K562 (cell line): ENCODE measurements at regions of chr6 and their contacts with region 1.

Region 1: GRCh38 chr6:125314019-125314581 is 12.3 kb upstream of the HDDC2 start:
- DNase-seq: peak; percentile 51 to 77 (median 62)
- ATAC-seq: peak; percentile 97
- H3K4me3 ChIP-seq: no peak overlapping the region
- H3K27ac ChIP-seq: no peak overlapping the region
- H3K4me1 ChIP-seq: no peaks in the 10 kb centered on the region
- H3K27me3 ChIP-seq: peaks cover 4 to 5% of the 10 kb centered on the region in 2 experiments; a peak in 3 of 5 replicates
- CTCF ChIP-seq: peak; percentile 93 to 96 (median 96)
- EP300 ChIP-seq: no peak
- POLR2A ChIP-seq: no peak
- RAD21 ChIP-seq: peak; percentile 91 to 95

Region 2: DNA sequence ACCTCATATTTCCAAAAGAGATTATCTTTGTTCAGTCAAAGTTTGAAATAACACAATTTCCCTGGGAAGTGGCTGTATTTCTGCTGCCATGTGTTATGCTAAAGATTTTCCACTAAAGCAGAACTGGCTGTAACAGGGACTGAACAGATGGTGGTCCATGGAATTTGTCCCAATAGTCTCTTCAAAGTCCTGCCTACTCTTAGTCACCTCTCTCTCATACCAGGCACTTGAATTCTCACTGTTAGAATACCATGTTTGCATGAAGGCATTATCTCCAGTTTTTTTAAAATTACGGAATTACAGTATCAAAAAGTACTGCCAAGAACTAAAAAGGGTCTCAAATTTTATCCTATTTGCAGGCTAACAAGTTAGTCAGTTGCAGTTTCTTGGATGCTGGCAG is 92.6 kb after region 1 on chr6:
- CTCF ChIA-PET with region 1: no interaction called
- POLR2A ChIA-PET with region 1: no interaction called
- in situ Hi-C with region 1: no loop called
- intact Hi-C with region 1: no loop called
- DNase-seq: no peak
- ATAC-seq: no peak
- H3K4me3 ChIP-seq: no peak overlapping the region
- H3K27ac ChIP-seq: no peak overlapping the region
- H3K4me1 ChIP-seq: no peaks in the 10 kb centered on the region
- H3K27me3 ChIP-seq: no peaks in the 10 kb centered on the region
- CTCF ChIP-seq: no peak
- EP300 ChIP-seq: no peak
- POLR2A ChIP-seq: no peak
- RAD21 ChIP-seq: no peak

Region 3: GRCh38 chr6:125469915-125470314 is 155.8 kb after region 1 on chr6:
- CTCF ChIA-PET with region 1: no interaction called
- POLR2A ChIA-PET with region 1: no interaction called
- in situ Hi-C with region 1: no loop called
- intact Hi-C with region 1: loop called (anchors 10 kb)
- DNase-seq: no peak
- ATAC-seq: no peak
- H3K4me3 ChIP-seq: no peak overlapping the region
- H3K27ac ChIP-seq: no peak overlapping the region
- H3K4me1 ChIP-seq: no peaks in the 10 kb centered on the region
- H3K27me3 ChIP-seq: no peaks in the 10 kb centered on the region
- CTCF ChIP-seq: no peak
- EP300 ChIP-seq: no peak
- POLR2A ChIP-seq: no peak
- RAD21 ChIP-seq: no peak

Region 4: DNA sequence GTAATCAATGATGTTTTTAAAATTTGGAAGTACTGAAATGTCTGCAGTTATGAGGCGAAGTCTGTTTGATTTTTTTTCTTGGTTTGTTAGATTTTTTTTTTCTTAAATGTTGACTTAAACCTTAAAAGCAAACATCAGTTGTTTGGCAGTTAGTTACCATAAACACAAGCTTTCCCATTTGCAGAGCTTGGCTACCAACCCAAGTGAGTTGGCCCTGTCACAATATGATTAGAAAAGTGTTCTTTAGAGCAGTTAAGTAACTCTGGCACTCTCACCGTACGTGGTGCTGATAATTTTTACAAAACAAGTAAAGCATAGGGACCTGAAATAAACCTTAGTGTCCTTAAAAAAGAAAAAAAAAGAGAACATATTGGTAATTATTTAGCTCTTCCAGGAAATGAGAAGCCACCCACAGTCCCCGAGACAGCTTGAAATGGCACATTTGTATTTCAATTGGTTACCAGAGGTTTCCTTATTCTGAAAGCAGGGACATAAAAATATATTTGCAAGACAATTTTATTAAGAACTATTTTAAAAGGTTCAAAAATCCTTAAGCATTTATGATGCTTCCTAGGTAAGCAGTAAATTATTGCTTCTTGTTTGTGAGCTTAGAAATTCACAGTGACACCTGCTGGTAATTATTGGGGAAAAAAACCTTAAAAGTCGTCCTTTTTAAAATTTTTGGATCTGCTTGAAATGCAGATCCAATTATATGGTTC is 439.3 kb after region 1 on chr6:
- CTCF ChIA-PET with region 1: interaction called, 10 read pairs
- POLR2A ChIA-PET with region 1: no interaction called
- in situ Hi-C with region 1: loop called (anchors 5 kb)
- intact Hi-C with region 1: loop called (anchors 1 kb)
- DNase-seq: peak in 1 of 4 experiments; percentile 36
- ATAC-seq: no peak
- H3K4me3 ChIP-seq: no peak overlapping the region
- H3K27ac ChIP-seq: no peak overlapping the region
- H3K4me1 ChIP-seq: peaks cover 9 to 17% of the 10 kb centered on the region in 2 experiments; a peak in 4 of 5 replicates
- H3K27me3 ChIP-seq: peaks cover 16 to 27% of the 10 kb centered on the region in 2 experiments
- CTCF ChIP-seq: peak in 1 of 3 experiments; percentile 61; a peak in 2 of 6 replicates
- EP300 ChIP-seq: no peak
- POLR2A ChIP-seq: no peak
- RAD21 ChIP-seq: peak; percentile 58 to 69

Region 5: DNA sequence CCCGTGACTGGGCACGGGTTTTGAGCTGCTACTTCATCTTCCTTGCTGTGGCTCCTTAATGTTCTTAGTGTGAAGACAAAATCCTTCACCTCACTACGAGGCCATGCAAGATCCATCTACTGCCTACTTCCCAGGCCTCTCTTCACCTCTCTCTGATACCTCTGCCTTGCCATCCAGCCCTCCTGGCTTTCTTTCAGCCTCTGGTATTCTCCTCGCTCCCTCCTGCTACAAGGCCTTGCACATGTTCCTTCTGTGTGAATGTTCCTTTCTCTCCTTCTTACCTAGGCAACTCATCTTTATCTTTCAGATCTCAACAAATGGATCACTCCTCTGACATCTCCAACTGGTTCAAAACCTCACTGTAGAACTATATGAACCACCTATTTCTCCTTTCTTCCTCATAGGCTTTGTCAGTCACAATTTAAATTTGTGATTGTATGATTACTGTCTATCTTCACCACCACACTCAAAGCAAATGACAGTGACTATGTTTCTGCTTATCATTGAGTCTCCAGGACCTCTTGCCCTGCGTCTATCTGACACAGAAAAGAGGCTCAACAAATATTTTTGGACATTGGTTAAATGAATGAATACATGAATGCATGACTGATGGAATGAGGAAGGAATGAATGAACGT is 455.2 kb after region 1 on chr6:
- CTCF ChIA-PET with region 1: interaction called, 17 read pairs
- POLR2A ChIA-PET with region 1: no interaction called
- in situ Hi-C with region 1: no loop called
- intact Hi-C with region 1: loop called (anchors 1 kb)
- DNase-seq: no peak
- ATAC-seq: peak; percentile 57
- H3K4me3 ChIP-seq: no peak overlapping the region
- H3K27ac ChIP-seq: no peak overlapping the region
- H3K4me1 ChIP-seq: peaks cover 4% of the 10 kb centered on the region in 2 experiments; a peak in 3 of 5 replicates
- H3K27me3 ChIP-seq: peaks cover 0 to 6% of the 10 kb centered on the region in 2 experiments; a peak in 2 of 5 replicates
- CTCF ChIP-seq: no peak
- EP300 ChIP-seq: no peak
- POLR2A ChIP-seq: no peak
- RAD21 ChIP-seq: no peak

Region 6: DNA sequence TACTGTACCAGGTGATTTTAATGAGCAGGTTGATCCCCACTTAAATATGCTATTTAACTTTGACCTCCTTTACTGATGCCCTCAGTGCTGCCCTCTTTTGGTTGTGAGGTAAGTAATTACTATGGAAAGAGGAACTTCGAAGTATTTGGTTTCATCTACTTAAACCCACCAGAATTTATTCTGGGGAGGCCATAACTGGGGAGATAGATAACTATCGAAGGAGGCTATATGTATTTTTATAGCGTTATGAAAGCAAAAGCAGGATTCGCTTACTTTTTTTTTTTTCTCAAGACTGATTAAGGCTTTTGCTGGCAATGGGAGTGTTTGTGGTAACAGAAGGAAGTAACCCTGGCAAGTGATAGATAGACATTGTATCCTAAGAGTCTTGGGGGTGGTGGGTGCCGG is 856.9 kb after region 1 on chr6:
- CTCF ChIA-PET with region 1: no interaction called
- POLR2A ChIA-PET with region 1: no interaction called
- in situ Hi-C with region 1: no loop called
- intact Hi-C with region 1: loop called (anchors 10 kb)
- DNase-seq: peak in 2 of 4 experiments; percentile 51 to 76
- ATAC-seq: peak; percentile 91
- H3K4me3 ChIP-seq: no peak overlapping the region
- H3K27ac ChIP-seq: no peak overlapping the region
- H3K4me1 ChIP-seq: peaks cover 0 to 11% of the 10 kb centered on the region in 2 experiments; a peak in 2 of 5 replicates
- H3K27me3 ChIP-seq: no peaks in the 10 kb centered on the region
- CTCF ChIP-seq: peak; percentile 49 to 71 (median 70); a peak in 5 of 6 replicates
- EP300 ChIP-seq: no peak
- POLR2A ChIP-seq: no peak
- RAD21 ChIP-seq: peak; percentile 63 to 75